ENCODE measurements at regions of chr16 and their contacts with region 1.

Region 1: GRCh38 chr16:53054670-53055485 is at the start of gene CHD9:
- DNase-seq: peak; percentile 84 to 91
- ATAC-seq: peak; percentile 91 to 95 (median 94)
- H3K4me3 ChIP-seq: peak within 1 kb of the TSS; percentile 94
- H3K27ac ChIP-seq: peak within 1 kb of the TSS; percentile 86
- H3K4me1 ChIP-seq: peaks cover 29% of the 10 kb centered on the region
- H3K27me3 ChIP-seq: no peaks in the 10 kb centered on the region
- CTCF ChIP-seq: peak; percentile 100
- total RNA-seq, gene CHD9: 36.4 to 47.9 (median 45.7) TPM

Region 2: GRCh38 chr16:52976539-52977167 is 78.2 kb before region 1 on chr16:
- intact Hi-C with region 1: no loop called
- DNase-seq: no peak
- ATAC-seq: peak in 1 of 4 donors; percentile 53
- H3K4me3 ChIP-seq: no peak overlapping the region
- H3K27ac ChIP-seq: no peak overlapping the region
- H3K4me1 ChIP-seq: no peaks in the 10 kb centered on the region
- H3K27me3 ChIP-seq: no peaks in the 10 kb centered on the region
- CTCF ChIP-seq: peak; percentile 39

Region 3: DNA sequence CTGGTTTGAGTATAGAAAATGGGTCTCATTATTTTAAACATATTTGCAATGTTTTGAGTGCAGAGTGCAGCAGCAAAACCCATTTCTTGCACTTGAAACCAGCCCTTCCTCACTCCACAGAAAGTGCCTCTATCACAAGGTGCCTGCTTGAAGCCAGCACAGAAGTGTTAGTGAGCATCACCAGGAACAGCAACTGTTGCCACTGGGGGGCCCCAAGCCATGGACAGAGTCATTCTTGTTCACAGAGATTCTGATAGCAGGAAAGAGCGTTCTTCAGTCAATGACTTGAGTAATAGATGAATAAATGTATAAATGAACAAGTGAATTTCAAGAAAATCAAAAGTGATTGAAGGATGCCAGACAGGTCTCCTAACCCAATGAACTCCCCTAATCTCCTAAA is 47.8 kb before region 1 on chr16:
- intact Hi-C with region 1: no loop called
- DNase-seq: no peak
- ATAC-seq: no peak
- H3K4me3 ChIP-seq: no peak overlapping the region
- H3K27ac ChIP-seq: no peak overlapping the region
- H3K4me1 ChIP-seq: no peaks in the 10 kb centered on the region
- H3K27me3 ChIP-seq: no peaks in the 10 kb centered on the region
- CTCF ChIP-seq: no peak

Region 4: DNA sequence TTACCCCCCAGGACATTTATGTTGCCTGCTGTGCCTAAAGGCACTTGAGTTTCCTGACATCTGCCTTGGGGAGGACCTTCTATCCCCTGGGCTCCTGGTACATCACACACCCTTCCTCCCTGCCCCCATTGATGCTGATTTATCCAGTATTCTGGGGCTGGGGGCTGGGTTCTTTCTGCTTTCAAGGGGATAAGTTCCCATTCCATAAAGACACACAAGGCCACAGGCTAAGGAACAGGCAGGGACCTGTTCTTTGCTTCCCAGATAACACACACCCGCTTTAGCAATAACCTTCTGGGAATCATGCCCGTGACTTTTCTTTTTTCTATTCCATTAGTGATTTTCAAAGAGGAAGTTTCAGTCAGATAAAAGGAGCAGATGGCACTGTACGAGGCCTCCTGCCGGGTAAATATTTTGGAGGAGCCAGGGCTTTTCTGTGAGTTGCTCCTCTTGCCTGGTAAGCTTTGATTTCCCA is 30.5 kb after region 1 on chr16:
- intact Hi-C with region 1: no loop called
- DNase-seq: no peak
- ATAC-seq: no peak
- H3K4me3 ChIP-seq: no peak overlapping the region
- H3K27ac ChIP-seq: peak overlapping the region; percentile 61
- H3K4me1 ChIP-seq: peaks cover 56% of the 10 kb centered on the region
- H3K27me3 ChIP-seq: no peaks in the 10 kb centered on the region
- CTCF ChIP-seq: no peak

Region 5: GRCh38 chr16:53099318-53100130 is 44.6 kb after region 1 on chr16:
- intact Hi-C with region 1: loop called in 1 of 2 experiments (anchors 2 kb)
- DNase-seq: peak; percentile 94 to 95
- ATAC-seq: peak; percentile 88 to 94 (median 90)
- H3K4me3 ChIP-seq: peak overlapping the region; percentile 67
- H3K27ac ChIP-seq: peak overlapping the region; percentile 89
- H3K4me1 ChIP-seq: peaks cover 31% of the 10 kb centered on the region
- H3K27me3 ChIP-seq: no peaks in the 10 kb centered on the region
- CTCF ChIP-seq: no peak

Region 6: GRCh38 chr16:53130159-53131049 is 75.5 kb after region 1 on chr16:
- intact Hi-C with region 1: loop called in 1 of 2 experiments (anchors 2 kb)
- DNase-seq: peak; percentile 98 to 99
- ATAC-seq: peak; percentile 90 to 94 (median 92)
- H3K4me3 ChIP-seq: peak overlapping the region; percentile 95
- H3K27ac ChIP-seq: peak overlapping the region; percentile 94
- H3K4me1 ChIP-seq: peaks cover 28% of the 10 kb centered on the region
- H3K27me3 ChIP-seq: no peaks in the 10 kb centered on the region
- CTCF ChIP-seq: peak; percentile 81

Region 7: GRCh38 chr16:53159781-53160436 is 105.0 kb after region 1 on chr16:
- intact Hi-C with region 1: loop called (anchors 2 to 5 kb)
- DNase-seq: no peak
- ATAC-seq: peak; percentile 51 to 86 (median 68)
- H3K4me3 ChIP-seq: no peak overlapping the region
- H3K27ac ChIP-seq: no peak overlapping the region
- H3K4me1 ChIP-seq: no peaks in the 10 kb centered on the region
- H3K27me3 ChIP-seq: no peaks in the 10 kb centered on the region
- CTCF ChIP-seq: peak; percentile 71

Region 8: DNA sequence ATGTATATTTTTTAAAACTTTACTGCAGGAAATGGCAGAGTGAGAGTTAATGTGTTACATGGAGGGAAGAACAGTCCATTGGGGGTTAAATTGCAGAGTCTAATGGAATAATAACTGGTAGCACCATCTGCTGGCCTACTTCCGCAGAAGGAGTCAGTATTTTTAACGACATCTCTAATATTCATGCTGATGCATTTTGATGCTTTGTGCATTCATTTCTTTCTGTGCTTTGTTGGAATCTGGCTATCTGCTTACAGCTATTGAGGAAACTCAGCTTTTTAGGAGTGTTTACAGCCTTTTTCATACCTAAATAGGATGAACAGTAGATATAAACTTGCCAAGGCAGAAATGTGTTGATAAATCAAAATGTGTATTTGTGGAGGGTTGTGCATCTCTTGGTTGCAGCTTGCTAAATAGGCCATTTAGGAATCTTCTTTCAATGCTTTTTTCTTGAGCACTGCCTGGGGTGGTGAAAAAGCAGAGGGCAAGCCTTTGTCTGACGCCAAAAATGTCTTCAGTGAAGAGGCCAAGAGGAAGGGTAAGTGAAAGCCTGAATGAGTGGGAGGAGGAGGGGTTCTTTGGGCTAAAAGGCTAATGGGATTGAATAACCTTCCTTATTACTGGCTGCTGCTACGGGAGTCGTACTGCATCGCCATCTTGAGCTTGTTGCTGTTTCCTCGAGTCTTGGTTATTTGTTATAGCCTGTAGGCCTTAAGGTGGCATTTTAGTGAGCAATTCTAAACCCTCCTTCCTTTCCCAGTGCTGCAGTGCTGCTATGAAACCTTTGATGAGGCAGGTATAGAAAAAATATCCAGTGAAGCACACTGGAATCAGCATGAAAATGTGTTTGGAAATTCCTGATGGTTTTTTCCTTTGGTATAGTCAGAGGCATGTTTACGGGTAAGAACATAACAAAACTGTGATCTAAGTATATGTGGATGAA is 153.2 kb after region 1 on chr16:
- intact Hi-C with region 1: loop called (anchors 5 kb)
- DNase-seq: no peak
- ATAC-seq: peak; percentile 84 to 89 (median 86)
- H3K4me3 ChIP-seq: peak overlapping the region; percentile 69
- H3K27ac ChIP-seq: peak overlapping the region; percentile 86
- H3K4me1 ChIP-seq: peaks cover 61% of the 10 kb centered on the region
- H3K27me3 ChIP-seq: no peaks in the 10 kb centered on the region
- CTCF ChIP-seq: peak; percentile 52

Region 9: DNA sequence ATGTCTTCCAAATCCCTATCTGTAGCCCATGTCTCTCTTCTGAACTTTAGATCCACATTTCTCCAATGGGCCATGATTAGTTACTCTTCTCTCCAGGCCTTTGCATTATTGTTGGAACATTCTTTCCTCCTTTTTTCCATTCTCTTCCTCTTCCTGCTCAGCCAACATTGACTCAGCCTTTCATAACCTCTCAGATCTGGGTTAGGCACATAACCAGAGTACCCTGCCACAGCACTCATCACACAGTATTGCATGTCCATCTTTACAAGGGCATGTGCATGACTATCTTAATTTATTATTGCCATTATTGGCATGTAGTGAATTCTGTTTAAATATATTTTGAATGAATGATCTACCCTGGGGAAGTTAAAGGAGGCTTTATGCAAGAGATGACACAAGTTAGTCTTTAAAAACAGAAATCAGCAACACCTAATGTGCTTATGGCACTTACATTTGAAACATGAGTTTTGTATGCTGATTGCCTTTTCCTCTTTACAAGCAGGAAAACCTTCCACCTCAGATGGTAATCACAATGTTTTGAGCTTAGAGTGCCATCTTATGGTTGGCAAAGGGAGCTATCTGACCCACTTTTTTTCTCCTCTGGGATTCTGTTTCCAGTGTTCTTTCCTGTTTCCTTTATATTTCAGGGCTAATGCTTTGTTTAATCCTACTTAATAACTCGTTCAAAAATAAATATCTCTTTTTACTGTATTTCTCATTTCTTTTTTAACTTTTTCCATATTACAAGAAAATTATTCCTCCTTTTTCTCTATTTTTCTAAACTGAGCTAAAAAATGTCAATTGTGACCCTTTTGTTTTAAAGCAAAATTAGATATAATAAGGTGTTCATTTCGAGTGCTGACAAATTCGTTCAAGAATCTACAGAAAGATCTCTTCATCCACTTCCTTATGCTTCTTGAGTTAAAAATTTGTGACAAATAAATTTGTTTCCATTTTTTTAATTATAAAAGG is 228.4 kb after region 1 on chr16:
- intact Hi-C with region 1: loop called in 1 of 2 experiments (anchors 5 kb)
- DNase-seq: no peak
- ATAC-seq: peak in 2 of 4 donors; percentile 37 to 68
- H3K4me3 ChIP-seq: no peak overlapping the region
- H3K27ac ChIP-seq: no peak overlapping the region
- H3K4me1 ChIP-seq: no peaks in the 10 kb centered on the region
- H3K27me3 ChIP-seq: no peaks in the 10 kb centered on the region
- CTCF ChIP-seq: peak; percentile 48

Region 10: DNA sequence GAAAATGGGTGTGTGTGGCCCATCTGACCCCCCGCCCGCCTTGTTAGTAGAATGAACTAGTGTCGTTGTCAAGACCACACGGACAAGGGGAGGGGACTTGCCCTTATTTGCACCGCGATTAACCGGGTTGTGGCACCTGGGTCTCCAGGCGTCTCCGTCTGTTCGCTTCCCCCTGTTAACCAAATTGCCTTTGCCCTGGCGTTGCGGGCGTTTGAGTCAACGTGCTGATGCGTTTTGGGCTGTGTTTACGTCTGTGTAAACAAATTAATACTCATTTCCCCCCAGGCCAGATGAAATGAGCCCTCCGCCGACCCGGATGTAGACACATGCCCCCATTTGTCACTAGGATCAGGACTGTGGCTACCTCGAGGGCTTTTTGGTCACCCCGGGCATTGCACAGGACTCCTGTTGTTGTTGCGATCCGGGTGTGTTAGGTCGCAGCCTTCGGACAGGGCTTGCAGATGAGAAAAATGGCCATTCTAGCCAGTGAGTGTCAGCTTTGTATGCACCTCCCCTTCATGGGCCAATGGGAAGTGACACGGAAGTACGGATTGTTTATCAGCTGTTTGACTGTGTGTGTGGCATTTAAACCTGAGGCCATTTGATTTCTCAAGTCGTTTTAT is 380.3 kb after region 1 on chr16:
- intact Hi-C with region 1: loop called in 1 of 2 experiments (anchors 5 kb)
- DNase-seq: peak; percentile 57 to 82
- ATAC-seq: peak; percentile 89 to 92 (median 90)
- H3K4me3 ChIP-seq: peak overlapping the region; percentile 82
- H3K27ac ChIP-seq: peak overlapping the region; percentile 92
- H3K4me1 ChIP-seq: peaks cover 20% of the 10 kb centered on the region
- H3K27me3 ChIP-seq: no peaks in the 10 kb centered on the region
- CTCF ChIP-seq: no peak